ENCODE measurements at regions of chr2 and their contacts with region 1.

Region 1: DNA sequence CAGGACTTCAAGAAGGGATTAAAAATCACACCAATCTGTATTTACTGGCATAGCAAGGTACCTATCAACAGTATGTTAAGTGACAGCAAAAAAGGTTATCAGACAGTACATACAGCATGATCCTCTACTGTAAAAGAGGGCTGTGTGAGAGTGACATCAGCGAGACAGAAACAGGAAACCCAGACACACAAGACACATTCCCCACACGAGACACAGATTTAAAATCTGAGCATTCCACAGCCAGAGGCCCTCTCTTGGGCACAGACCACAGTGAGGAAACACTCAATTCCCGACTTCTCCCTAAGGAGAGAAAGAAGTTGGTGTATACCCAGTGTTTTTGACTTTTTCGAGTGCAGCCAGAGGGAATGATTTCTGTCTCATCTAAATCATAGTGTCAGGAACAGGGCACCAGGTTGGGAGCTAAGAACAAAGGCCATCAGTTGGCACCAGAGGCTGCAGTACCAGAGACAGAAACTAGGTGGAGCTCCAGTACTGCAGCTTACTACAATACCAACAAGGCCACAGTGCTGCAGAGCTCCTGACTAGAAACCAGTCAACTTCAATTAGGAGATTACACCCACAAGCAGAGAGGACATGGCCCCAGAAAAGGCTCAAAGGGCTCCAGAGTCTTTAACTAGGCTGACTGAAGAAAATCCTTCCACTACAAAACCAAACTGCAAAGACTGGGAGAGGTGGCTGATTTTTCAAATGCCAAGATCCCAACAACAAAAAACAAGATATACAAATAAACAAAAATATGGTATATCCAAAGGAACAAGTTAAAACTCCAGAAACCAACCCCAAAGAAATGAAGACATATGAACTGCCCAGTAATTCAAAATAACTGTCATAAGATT is 41.0 kb downstream of the UNC50 start:
- H3K4me3 ChIP-seq: no peak overlapping the region
- H3K27ac ChIP-seq: no peak overlapping the region
- H3K4me1 ChIP-seq: no peaks in the 10 kb centered on the region
- CTCF ChIP-seq: peak; percentile 86

Region 2: GRCh38 chr2:98674233-98674964 is 25.0 kb after region 1 on chr2:
- CTCF ChIA-PET with region 1: interaction called, 10 read pairs
- POLR2A ChIA-PET with region 1: no interaction called
- H3K4me3 ChIP-seq: no peak overlapping the region
- H3K27ac ChIP-seq: no peak overlapping the region
- H3K4me1 ChIP-seq: no peaks in the 10 kb centered on the region
- CTCF ChIP-seq: no peak

Region 3: DNA sequence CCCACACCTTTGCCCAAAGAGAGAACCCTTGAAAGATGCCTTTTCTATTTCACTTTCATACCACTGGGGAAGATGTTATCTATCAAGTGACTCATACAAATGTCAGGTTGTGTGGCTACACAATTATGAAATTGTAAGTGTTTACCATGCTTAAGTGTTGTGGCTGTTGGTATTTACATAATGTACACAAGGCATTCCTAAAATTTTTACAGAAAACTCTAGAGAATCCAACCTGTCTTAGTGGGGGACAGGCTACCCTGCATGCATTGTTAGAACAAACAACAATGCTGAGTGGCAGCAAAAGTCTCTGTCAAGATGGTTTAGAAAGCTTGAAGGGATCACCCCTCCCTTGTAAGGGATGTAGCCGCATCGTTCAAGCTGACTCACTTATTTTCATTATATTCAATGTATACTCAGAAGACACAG is 87.1 kb after region 1 on chr2:
- CTCF ChIA-PET with region 1: no interaction called
- POLR2A ChIA-PET with region 1: no interaction called
- H3K4me3 ChIP-seq: no peak overlapping the region
- H3K27ac ChIP-seq: no peak overlapping the region
- H3K4me1 ChIP-seq: peaks cover 2% of the 10 kb centered on the region; the same call in 1 of the 2 replicates
- CTCF ChIP-seq: no peak

Region 4: GRCh38 chr2:98835831-98836385 is 186.5 kb after region 1 on chr2:
- CTCF ChIA-PET with region 1: interaction called, 37 read pairs
- POLR2A ChIA-PET with region 1: no interaction called
- H3K4me3 ChIP-seq: no peak overlapping the region
- H3K27ac ChIP-seq: no peak overlapping the region
- H3K4me1 ChIP-seq: no peaks in the 10 kb centered on the region
- CTCF ChIP-seq: no peak

Region 5: DNA sequence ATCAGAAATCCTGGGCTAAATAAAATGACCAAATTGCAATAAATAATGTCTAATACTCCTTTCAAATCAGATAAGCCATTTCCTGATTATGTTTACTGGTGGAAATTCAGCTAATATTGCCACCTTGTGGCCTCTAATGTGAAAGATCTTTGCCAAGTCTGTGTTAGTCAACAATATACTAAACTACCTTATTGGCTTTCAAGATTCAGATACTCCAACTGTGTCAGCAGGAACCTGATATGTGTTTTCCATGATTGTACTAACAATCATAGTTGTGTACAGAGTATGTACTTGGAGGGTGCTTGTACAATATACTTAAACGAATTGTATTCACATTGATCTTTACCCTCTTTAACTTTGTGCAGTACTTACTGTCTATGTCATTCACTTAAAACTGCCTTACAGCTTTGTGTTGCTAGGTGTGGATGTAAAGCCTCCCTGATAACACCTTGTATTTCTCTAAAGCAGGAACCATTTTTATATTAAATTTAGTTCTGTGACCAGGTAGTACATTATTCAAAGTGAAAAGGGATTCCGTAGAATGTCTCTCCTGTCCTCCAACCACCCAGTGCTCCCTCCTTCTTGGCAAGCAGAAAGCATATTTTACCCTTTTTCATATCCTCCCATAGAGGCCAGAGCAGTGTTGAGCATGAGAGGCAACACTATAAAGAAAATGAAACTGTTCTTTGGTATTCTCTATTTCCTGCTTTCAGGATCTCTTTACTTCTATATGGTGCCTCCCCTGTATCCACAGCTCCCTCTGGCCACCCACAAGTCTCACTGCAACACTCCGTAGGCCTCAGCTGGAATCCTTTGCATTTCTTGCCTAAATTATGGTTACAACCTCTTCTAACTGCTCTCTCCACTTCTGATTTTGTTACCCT is 417.0 kb after region 1 on chr2:
- CTCF ChIA-PET with region 1: interaction called, 21 read pairs
- POLR2A ChIA-PET with region 1: no interaction called
- H3K4me3 ChIP-seq: no peak overlapping the region
- H3K27ac ChIP-seq: no peak overlapping the region
- H3K4me1 ChIP-seq: no peaks in the 10 kb centered on the region
- CTCF ChIP-seq: peak; percentile 22; the same call in 1 of the 2 replicates

Measured in HEK293 (cell line).